ENCODE measurements at regions of chr22 and their contacts with region 1.

Region 1: DNA sequence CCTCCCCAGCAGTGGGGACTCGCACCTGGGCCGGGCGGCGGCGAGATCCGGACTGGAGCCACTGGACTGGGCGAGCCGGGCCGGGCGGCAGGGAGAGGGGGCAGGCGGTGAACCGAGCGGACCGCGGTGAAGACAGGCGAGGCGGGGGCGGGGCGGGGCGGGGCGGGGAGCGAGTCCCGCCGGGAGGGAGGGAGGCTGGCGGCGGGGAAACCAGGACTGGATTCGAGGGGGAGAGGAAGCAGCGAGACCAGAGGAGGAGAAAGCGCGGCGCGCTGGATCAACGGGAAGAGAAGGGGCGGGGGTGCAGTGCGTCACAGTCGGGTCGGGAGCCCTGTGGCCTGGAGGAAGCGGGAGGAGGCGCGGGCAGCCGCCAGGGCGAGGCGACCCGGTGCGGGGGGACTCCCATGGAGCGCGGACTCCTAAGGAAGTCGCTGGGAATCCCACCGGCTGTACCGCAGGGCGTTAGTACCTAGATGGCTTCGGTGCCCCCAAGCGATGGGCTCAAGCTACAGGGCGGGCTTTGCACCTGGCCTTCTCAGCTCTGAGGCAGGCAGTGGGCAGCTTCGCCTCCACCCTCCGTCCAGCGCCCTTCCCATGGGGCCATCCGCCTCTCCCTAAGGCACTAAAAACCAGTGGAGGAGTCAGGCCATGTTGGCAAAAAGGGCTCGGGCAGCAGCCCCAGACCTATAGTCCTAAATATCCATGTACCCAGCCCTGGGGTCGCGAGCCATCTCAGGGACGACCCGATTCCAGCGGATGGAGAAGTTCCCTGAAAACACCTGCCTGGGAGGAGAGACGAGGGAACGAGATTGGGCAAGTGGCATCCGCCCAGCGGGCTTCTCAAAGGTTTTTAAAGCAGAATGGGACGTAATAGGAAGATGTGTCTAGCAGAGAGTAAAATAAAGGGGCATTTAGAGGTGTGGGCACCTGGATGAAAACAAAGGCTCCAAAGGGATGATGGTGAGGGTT is at the start of gene TMEM121B:
- DNase-seq: peak; percentile 73 to 77
- H3K4me3 ChIP-seq: peak within 1 kb of the TSS; percentile 47
- H3K4me3 Mint-ChIP-seq: peak within 1 kb of the TSS; percentile 85
- H3K27ac Mint-ChIP-seq: peak within 1 kb of the TSS; percentile 71
- H3K4me1 ChIP-seq: peaks cover 5% of the 10 kb centered on the region; the same call in 1 of the 2 replicates
- H3K4me1 Mint-ChIP-seq: peaks cover 9% of the 10 kb centered on the region
- H3K27me3 ChIP-seq: no peaks in the 10 kb centered on the region
- H3K27me3 Mint-ChIP-seq: peaks cover 9% of the 10 kb centered on the region
- CTCF ChIP-seq: no peak
- total RNA-seq, gene TMEM121B: 0.49 and 0.82 TPM in 2 replicates

Region 2: GRCh38 chr22:17158568-17159503 is 37.3 kb after region 1 on chr22 and contains the start of gene HDHD5:
- CTCF ChIA-PET with region 1: no interaction called
- POLR2A ChIA-PET with region 1: no interaction called
- intact Hi-C with region 1: loop called (anchors 1 kb)
- DNase-seq: peak; percentile 90 to 91
- H3K4me3 ChIP-seq: peak within 1 kb of the TSS; percentile 97
- H3K4me3 Mint-ChIP-seq: peak within 1 kb of the TSS; percentile 86
- H3K27ac Mint-ChIP-seq: peak within 1 kb of the TSS; percentile 69
- H3K4me1 ChIP-seq: 0 out of 2 replicates have a peak, but pooled peaks cover 3% of the 10 kb centered on the region
- H3K4me1 Mint-ChIP-seq: no peaks in the 10 kb centered on the region
- H3K27me3 ChIP-seq: no peaks in the 10 kb centered on the region
- H3K27me3 Mint-ChIP-seq: no peaks in the 10 kb centered on the region
- CTCF ChIP-seq: no peak
- total RNA-seq, gene HDHD5: 57.0 and 63.7 TPM in 2 replicates